A549 (cell line): ENCODE measurements at regions of chr7 and their contacts with region 1.

Region 1: GRCh38 chr7:139340037-139340807 is 915 bp upstream of the FMC1 start:
- DNase-seq: peak; percentile 95 to 99
- ATAC-seq: peak; percentile 87
- H3K4me3 ChIP-seq: peak overlapping the region; percentile 83
- H3K27ac ChIP-seq: peak overlapping the region; percentile 94 to 98
- H3K4me1 ChIP-seq: peaks cover 9% of the 10 kb centered on the region; the same call in 1 of the 3 replicates
- CTCF ChIP-seq: peak; percentile 64
- EP300 ChIP-seq: no peak
- POLR2A ChIP-seq: peak; percentile 39
- RAD21 ChIP-seq: peak; percentile 21 to 32; a peak in 1 of 5 replicates

Region 2: GRCh38 chr7:139321071-139321745 is 19.0 kb before region 1 on chr7:
- CTCF ChIA-PET with region 1: interaction called, 16 read pairs
- POLR2A ChIA-PET with region 1: interaction called, 5 read pairs
- DNase-seq: peak in 1 of 2 experiments; percentile 48
- ATAC-seq: peak; percentile 54 to 84; a peak in 3 of 6 replicates
- H3K4me3 ChIP-seq: no peak overlapping the region
- H3K27ac ChIP-seq: no peak overlapping the region
- H3K4me1 ChIP-seq: no peaks in the 10 kb centered on the region
- CTCF ChIP-seq: 0 out of 3 replicates have a peak, but pooled peaks have one; percentile 18
- EP300 ChIP-seq: no peak
- POLR2A ChIP-seq: no peak
- RAD21 ChIP-seq: peak in 1 of 2 experiments; percentile 23; a peak in 3 of 5 replicates

Region 3: DNA sequence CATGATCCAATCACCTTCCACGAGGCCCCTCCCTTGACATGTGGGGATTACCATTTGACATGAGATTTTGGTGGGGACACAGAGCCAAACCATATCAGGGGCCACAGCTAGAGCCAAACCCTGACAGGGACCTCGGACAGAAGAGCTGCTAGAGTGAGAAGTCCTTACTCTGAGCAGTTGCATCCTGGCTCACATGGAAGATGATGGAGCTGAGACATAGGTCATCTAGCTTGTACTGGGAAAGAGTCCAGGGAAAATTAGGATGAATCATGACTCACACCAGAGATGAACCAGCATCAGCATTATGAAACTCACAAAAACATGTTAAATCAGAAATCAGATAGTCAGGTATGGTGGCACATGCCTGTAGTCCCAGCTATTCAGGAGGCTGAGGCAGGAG is 11.8 kb before region 1 on chr7:
- CTCF ChIA-PET with region 1: interaction called, 24 read pairs
- POLR2A ChIA-PET with region 1: interaction called, 4 read pairs
- DNase-seq: peak in 1 of 2 experiments; percentile 20
- ATAC-seq: peak; percentile 67 to 80; a peak in 4 of 6 replicates
- H3K4me3 ChIP-seq: no peak overlapping the region
- H3K27ac ChIP-seq: no peak overlapping the region; a peak in 1 of 6 replicates
- H3K4me1 ChIP-seq: peaks cover 7% of the 10 kb centered on the region; the same call in 1 of the 3 replicates
- CTCF ChIP-seq: no peak
- EP300 ChIP-seq: no peak
- POLR2A ChIP-seq: no peak
- RAD21 ChIP-seq: no peak

Region 4: DNA sequence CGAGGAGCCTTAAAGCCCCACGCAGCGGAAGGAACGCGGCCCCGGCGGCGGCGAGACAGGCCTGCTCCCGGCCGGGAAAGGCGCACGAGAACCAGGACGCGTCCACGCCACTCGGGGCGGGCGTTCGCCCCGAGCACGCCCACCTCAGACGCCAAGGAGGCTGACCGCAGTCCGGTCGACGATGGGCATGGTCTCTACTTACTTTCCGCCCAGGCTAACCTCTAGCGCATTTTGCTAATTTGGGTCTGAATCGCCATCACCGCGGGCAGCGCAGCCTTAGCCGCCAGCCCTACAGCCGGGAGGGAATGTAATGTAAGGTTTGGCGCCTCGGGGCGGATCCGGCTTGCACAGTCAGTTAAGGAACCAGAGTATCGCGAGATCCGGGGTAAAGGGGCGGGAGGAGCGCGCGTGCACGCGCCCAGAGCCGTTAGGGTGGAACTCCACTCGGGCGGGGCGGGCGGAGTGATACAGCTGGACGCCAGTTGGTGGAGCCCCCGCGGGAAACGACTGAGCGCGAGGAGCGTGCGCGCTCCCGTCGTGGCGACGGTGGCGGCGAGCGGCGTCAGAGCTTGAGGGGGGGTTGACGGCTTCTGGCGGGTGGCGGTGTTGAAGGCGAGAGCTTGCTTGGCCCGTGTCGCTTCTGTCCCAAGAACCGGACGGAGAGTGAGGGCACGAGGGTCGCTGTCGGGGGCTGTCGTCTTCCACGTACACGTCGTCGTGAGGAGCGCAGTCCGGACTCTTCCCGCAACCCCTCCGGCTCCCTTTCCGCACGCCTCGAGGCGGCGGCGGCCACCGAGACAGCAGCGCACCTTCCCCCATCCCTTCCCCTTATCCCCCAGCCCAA is 19.4 kb after region 1 on chr7 and contains the start of gene LUC7L2:
- CTCF ChIA-PET with region 1: interaction called, 8 read pairs
- POLR2A ChIA-PET with region 1: interaction called, 18 read pairs
- DNase-seq: peak; percentile 88 to 99
- ATAC-seq: peak; percentile 80 to 91
- H3K4me3 ChIP-seq: peak within 1 kb of the TSS; percentile 97
- H3K27ac ChIP-seq: peak within 1 kb of the TSS; percentile 97 to 99
- H3K4me1 ChIP-seq: peaks cover 21% of the 10 kb centered on the region
- CTCF ChIP-seq: no peak
- EP300 ChIP-seq: no peak
- POLR2A ChIP-seq: peak; percentile 94
- RAD21 ChIP-seq: no peak
- polyA plus RNA-seq, gene LUC7L2: 49.5 and 75.7 TPM in 2 replicates

Region 5: DNA sequence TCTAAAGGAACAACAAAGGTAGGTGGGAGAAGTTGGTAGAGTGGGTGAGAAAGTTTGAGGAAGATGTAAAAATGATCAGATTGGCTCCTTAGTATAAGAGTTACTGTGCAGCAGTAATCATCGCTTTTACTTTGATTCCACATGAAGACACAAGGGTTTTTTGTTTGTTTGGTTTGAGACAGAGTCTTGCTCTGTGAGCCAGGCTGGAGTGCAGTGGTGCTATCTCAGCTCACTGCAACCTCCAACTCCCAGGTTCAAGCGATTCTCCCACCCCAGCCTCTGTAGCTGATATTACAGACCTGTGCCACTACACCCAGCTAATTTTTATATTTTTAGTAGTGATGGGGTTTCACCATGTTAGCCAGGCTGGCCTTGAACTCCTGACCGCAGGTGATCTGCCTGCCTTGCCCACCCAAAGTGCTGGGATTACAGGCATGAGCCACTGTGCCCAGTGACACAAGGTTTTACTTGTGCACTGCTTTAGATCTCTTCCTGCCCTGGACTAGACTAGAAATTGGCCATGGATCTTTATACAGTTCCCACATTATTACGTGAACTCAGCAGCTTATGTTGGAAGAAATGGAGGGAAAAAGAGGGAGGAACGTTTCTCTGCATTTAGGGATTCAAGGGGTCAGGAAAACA is 30.2 kb after region 1 on chr7:
- CTCF ChIA-PET with region 1: no interaction called
- POLR2A ChIA-PET with region 1: interaction called, 12 read pairs
- DNase-seq: no peak
- ATAC-seq: peak in 1 of 2 experiments; percentile 54; a peak in 3 of 6 replicates
- H3K4me3 ChIP-seq: no peak overlapping the region
- H3K27ac ChIP-seq: no peak overlapping the region
- H3K4me1 ChIP-seq: peaks cover 24% of the 10 kb centered on the region
- CTCF ChIP-seq: no peak
- EP300 ChIP-seq: no peak
- POLR2A ChIP-seq: no peak
- RAD21 ChIP-seq: no peak